ENCODE measurements at regions of chr2 and their contacts with region 1.

Region 1: DNA sequence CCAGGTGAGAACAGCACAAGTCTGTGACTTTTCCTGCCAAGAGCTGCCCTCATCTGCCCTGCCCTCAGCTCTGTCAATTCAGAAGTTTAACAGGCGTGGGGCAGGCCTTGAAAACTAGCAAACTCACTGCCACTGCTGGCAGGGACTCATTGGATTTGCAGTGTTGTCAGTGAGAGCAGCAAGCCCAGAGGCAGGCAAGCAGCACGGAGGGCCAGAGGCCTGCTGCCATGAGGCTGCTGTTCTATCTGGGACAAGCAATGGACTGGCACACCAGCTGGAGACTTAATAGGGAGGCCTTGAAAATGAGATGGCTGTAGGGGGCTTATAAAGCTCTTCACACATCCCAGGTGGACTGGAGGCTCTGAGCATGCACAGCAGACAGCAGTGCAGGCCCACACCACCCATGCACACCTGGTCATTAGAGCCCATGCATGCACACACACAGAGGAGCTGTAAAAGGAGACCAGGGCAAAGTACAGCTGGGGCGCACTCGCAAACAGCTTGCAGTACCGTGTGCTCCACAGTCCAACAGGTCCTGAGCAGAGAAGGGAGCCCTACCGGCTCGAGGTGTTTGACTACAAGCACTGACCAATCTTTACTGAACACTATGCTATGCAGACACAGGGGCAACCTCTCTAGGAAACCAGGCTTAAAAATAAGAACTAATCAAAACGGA is 28.7 kb downstream of the MGAT4A start:
- DNase-seq: peak; percentile 77 to 89
- H3K4me3 ChIP-seq: no peak overlapping the region
- H3K4me3 Mint-ChIP-seq: peak overlapping the region; percentile 68
- H3K27ac Mint-ChIP-seq: peak overlapping the region; percentile 93
- H3K4me1 ChIP-seq: peaks cover 77% of the 10 kb centered on the region
- H3K4me1 Mint-ChIP-seq: peaks cover 42% of the 10 kb centered on the region
- H3K27me3 ChIP-seq: no peaks in the 10 kb centered on the region
- H3K27me3 Mint-ChIP-seq: no peaks in the 10 kb centered on the region
- CTCF ChIP-seq: no peak

Region 2: GRCh38 chr2:98518090-98518489 is 184.2 kb before region 1 on chr2:
- CTCF ChIA-PET with region 1: no interaction called
- POLR2A ChIA-PET with region 1: no interaction called
- intact Hi-C with region 1: no loop called
- DNase-seq: peak in 1 of 2 experiments; percentile 26
- H3K4me3 ChIP-seq: no peak overlapping the region
- H3K4me3 Mint-ChIP-seq: no peak overlapping the region
- H3K27ac Mint-ChIP-seq: no peak overlapping the region
- H3K4me1 ChIP-seq: no peaks in the 10 kb centered on the region
- H3K4me1 Mint-ChIP-seq: no peaks in the 10 kb centered on the region
- H3K27me3 ChIP-seq: no peaks in the 10 kb centered on the region
- H3K27me3 Mint-ChIP-seq: no peaks in the 10 kb centered on the region
- CTCF ChIP-seq: peak; percentile 17 to 50

Region 3: GRCh38 chr2:98649135-98649991 is 52.9 kb before region 1 on chr2:
- CTCF ChIA-PET with region 1: interaction called, 10 read pairs
- POLR2A ChIA-PET with region 1: no interaction called
- intact Hi-C with region 1: loop called (anchors 2 kb)
- DNase-seq: peak; percentile 82 to 84
- H3K4me3 ChIP-seq: no peak overlapping the region
- H3K4me3 Mint-ChIP-seq: no peak overlapping the region
- H3K27ac Mint-ChIP-seq: peak overlapping the region; percentile 4
- H3K4me1 ChIP-seq: no peaks in the 10 kb centered on the region
- H3K4me1 Mint-ChIP-seq: peaks cover 17% of the 10 kb centered on the region
- H3K27me3 ChIP-seq: no peaks in the 10 kb centered on the region
- H3K27me3 Mint-ChIP-seq: no peaks in the 10 kb centered on the region
- CTCF ChIP-seq: peak; percentile 95 to 98

Region 4: GRCh38 chr2:98685930-98686887 is 16.1 kb before region 1 on chr2:
- CTCF ChIA-PET with region 1: no interaction called
- POLR2A ChIA-PET with region 1: no interaction called
- intact Hi-C with region 1: no loop called
- DNase-seq: no peak
- H3K4me3 ChIP-seq: no peak overlapping the region
- H3K4me3 Mint-ChIP-seq: no peak overlapping the region
- H3K27ac Mint-ChIP-seq: no peak overlapping the region
- H3K4me1 ChIP-seq: peaks cover 15% of the 10 kb centered on the region
- H3K4me1 Mint-ChIP-seq: peaks cover 14% of the 10 kb centered on the region
- H3K27me3 ChIP-seq: no peaks in the 10 kb centered on the region
- H3K27me3 Mint-ChIP-seq: no peaks in the 10 kb centered on the region
- CTCF ChIP-seq: no peak

Region 5: DNA sequence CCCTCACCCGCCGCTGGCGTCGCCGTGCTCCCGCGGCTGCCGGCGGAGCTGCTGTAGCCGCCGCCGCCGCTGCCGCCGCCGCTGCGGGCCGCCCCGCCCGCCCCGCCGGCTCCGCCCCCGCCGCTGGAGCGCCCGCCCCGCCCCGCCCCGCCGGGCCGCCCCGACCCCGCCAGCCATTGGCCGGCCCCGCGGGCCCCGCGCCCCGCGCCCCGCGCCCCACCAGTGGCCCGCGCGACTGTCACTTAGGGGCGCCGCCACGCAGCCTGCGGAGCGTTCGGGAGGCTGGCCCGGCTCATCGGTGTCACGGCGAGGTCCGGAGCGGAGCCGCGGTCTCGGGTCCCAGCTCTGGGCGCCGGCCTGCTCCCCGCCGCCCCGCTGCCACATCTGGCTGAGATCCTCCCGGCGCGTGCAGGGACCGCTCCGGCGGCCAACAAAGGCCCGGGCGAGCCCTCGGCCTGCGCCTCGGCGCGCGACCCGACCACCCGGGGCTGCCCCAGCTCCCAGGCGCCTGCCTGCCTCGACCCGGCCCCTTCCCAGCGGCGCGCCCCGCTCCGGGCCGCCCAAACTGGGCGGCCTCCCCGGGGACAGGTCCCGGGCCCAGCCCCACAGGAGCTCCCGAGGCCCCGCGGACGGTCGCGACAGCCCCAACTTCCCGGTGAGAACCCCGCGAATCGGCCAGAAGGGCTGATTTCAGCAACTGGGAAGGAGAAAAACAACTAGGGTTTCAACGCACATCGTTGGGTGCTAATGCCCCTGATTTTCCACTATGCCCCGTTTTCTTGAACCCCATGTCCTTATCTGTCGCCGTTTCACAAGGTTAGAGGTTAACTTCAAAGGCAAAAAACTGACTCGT is 29.0 kb after region 1 on chr2 and contains the start of gene MGAT4A:
- CTCF ChIA-PET with region 1: interaction called, 5 read pairs
- POLR2A ChIA-PET with region 1: interaction called, 5 read pairs
- intact Hi-C with region 1: loop called (anchors 1 kb)
- DNase-seq: peak; percentile 79 to 87
- H3K4me3 ChIP-seq: peak within 1 kb of the TSS; percentile 82
- H3K4me3 Mint-ChIP-seq: peak within 1 kb of the TSS; percentile 85
- H3K27ac Mint-ChIP-seq: peak within 1 kb of the TSS; percentile 80
- H3K4me1 ChIP-seq: peaks cover 59% of the 10 kb centered on the region
- H3K4me1 Mint-ChIP-seq: peaks cover 33% of the 10 kb centered on the region
- H3K27me3 ChIP-seq: no peaks in the 10 kb centered on the region
- H3K27me3 Mint-ChIP-seq: no peaks in the 10 kb centered on the region
- CTCF ChIP-seq: no peak
- total RNA-seq, gene MGAT4A: 63.7 and 72.3 TPM in 2 replicates

Region 6: GRCh38 chr2:98771721-98772524 is 69.7 kb after region 1 on chr2:
- CTCF ChIA-PET with region 1: no interaction called
- POLR2A ChIA-PET with region 1: no interaction called
- intact Hi-C with region 1: loop called (anchors 2 kb)
- DNase-seq: no peak
- H3K4me3 ChIP-seq: no peak overlapping the region
- H3K4me3 Mint-ChIP-seq: no peak overlapping the region
- H3K27ac Mint-ChIP-seq: no peak overlapping the region
- H3K4me1 ChIP-seq: peaks cover 23% of the 10 kb centered on the region
- H3K4me1 Mint-ChIP-seq: peaks cover 41% of the 10 kb centered on the region
- H3K27me3 ChIP-seq: no peaks in the 10 kb centered on the region
- H3K27me3 Mint-ChIP-seq: no peaks in the 10 kb centered on the region
- CTCF ChIP-seq: no peak

Region 7: DNA sequence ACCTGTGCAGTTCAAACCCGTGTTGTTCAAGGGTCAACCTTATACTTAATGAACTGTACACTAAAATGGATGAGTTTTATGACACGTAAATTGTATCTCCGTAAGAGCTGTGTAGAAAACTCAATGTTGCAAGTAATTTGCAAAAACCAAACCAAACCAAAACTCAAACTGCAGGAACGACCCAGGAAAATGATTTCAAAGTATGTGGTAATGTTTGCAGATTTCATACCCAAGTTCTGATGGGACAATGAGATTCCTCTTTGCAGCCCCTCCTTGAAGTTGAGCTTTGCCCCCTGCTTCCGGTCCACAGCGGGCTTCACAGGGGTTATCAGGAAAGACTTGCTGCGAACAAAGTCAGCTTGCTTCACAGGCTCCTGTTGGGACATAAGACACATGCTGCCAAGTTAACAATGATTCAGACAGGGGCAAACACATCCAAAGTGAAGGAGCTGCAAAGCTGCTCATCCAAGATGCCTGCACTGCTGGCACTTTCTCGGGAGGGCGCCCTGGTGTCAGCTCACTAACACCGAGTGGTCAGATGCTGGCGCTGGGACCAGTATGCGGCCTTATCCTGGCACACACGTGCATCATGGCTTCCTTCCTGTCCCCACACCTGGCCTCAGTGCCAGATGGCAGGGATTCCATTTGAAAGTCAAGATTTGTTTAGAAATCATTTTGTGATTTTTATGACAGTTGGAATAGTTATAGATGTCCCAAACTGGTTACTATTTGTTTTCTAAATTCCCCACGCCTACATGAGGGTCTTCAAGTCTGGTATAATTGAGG is 93.8 kb after region 1 on chr2:
- CTCF ChIA-PET with region 1: interaction called, 4 read pairs
- POLR2A ChIA-PET with region 1: interaction called, 4 read pairs
- intact Hi-C with region 1: loop called (anchors 1 kb)
- DNase-seq: peak; percentile 90 to 95
- H3K4me3 ChIP-seq: 0 out of 2 replicates have a peak overlapping the region, but pooled peaks have one; percentile 2
- H3K4me3 Mint-ChIP-seq: peak overlapping the region; percentile 56
- H3K27ac Mint-ChIP-seq: peak overlapping the region; percentile 94
- H3K4me1 ChIP-seq: peaks cover 68% of the 10 kb centered on the region
- H3K4me1 Mint-ChIP-seq: peaks cover 54% of the 10 kb centered on the region
- H3K27me3 ChIP-seq: no peaks in the 10 kb centered on the region
- H3K27me3 Mint-ChIP-seq: no peaks in the 10 kb centered on the region
- CTCF ChIP-seq: no peak